ENCODE measurements at regions of chr12 and their contacts with region 1.

Region 1: GRCh38 chr12:52278541-52279421 is 4.3 kb downstream of the KRT86 start:
- DNase-seq: peak; percentile 44 to 60 (median 55)
- H3K4me3 ChIP-seq: no peak overlapping the region
- H3K4me3 Mint-ChIP-seq: peak overlapping the region in 5 of 8 donors; percentile 6 to 55 (median 44)
- H3K27ac ChIP-seq: no peak overlapping the region
- H3K27ac Mint-ChIP-seq: no peak overlapping the region
- H3K4me1 ChIP-seq: no peaks in the 10 kb centered on the region
- H3K4me1 Mint-ChIP-seq: peaks cover 3 to 5% (median 3%) of the 10 kb centered on the region in 4 donors
- H3K27me3 ChIP-seq: no peaks in the 10 kb centered on the region
- H3K27me3 Mint-ChIP-seq: peaks cover 8 to 13% of the 10 kb centered on the region in 2 donors

Region 2: DNA sequence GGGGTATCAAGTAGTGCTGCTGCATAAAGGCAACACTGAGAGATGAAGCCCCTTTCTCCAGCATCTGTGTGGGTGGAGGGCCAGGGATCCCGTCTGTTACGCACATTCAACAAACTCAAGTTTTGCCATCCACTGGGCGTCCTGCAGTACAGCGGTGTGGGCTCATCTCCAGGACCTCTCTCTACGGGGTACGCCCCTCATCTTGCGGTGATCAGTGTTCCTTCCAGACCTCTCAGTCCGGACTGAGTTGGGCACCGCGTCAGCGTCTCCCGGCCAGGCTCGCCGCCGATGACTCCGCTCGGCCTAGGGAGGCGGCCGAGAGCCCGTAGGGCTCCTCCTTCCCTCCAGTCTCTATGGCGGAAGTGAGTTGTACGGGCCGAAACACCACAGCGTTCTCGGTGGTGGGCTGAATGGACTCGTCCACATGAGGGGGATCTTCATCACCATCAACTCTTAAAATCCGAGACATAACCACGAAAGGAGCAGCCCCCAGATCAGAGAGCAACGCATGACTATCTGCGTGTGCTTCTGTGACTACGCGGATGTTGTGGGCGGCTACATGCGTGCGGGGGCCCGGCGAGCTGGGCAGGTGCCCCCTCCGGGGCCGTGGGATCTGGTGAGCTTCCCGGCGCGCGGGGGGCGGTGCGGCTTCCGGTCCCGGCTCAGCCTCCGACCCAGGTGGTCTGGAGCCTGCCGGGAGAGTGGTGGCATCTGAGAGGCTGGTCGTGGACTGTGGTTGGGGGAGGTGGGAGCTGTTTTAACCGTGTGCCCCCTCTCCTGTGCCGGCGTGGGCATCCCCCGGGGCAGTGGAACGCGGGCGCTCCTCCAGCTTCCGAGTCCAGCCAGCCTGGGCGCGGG is 209.2 kb before region 1 on chr12 and contains the start of gene ATG101:
- CTCF ChIA-PET with region 1: no interaction called
- POLR2A ChIA-PET with region 1: no interaction called
- intact Hi-C with region 1: no loop called
- DNase-seq: peak; percentile 90 to 92 (median 91)
- H3K4me3 ChIP-seq: peak within 1 kb of the TSS; percentile 92 to 96
- H3K4me3 Mint-ChIP-seq: peak within 1 kb of the TSS; percentile 94 to 100 (median 98)
- H3K27ac ChIP-seq: peak within 1 kb of the TSS; percentile 87
- H3K27ac Mint-ChIP-seq: peak within 1 kb of the TSS; percentile 94 to 100 (median 100)
- H3K4me1 ChIP-seq: peaks cover 42% of the 10 kb centered on the region
- H3K4me1 Mint-ChIP-seq: peaks cover 36 to 48% (median 41%) of the 10 kb centered on the region in 4 donors
- H3K27me3 ChIP-seq: no peaks in the 10 kb centered on the region
- H3K27me3 Mint-ChIP-seq: peaks cover 0 to 2% of the 10 kb centered on the region in 2 donors
- total RNA-seq, gene ATG101: 24.4 to 27.0 TPM

Region 3: DNA sequence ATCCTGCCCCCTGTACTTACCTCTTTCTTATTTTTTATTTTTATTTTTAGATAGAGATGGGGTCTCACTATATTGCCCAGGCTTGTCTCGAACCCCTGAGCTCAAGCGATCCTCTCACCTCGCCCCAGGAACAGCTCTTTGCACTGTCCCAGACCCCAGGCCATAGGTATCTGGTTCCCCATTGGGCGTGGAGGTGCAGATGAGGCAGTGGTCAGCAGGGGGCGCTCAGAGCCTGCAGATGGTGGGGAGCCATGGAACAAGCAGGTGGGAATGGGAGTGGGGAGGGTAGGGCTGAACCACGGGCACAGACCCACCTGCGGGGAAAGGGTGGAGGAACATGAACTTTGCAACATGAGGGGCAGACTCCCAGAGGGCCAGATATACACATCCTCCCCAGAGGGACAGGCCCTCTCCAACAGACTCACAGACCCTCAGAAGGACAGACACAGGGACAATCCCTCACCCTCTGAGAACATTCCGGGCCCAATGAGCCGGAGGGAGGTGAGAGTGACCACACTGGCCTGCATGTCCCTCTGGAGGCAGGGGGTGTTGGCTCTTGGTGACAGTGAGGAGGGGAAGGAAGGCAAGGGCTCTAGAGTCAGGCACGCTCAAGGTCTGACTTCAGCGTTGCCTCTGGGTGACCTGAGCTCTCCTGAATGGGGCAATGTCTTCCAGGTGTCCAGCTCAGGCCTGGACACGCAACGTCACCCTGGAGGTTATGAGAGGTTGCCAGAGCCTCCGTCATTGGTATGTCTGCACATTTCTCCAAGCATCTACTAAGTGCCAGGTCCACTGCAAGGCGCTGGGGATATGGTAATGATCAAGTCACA is 121.8 kb before region 1 on chr12:
- CTCF ChIA-PET with region 1: interaction called, 21 read pairs
- POLR2A ChIA-PET with region 1: no interaction called
- intact Hi-C with region 1: loop called (anchors 2 kb)
- DNase-seq: peak; percentile 67 to 73 (median 68)
- H3K4me3 ChIP-seq: no peak overlapping the region
- H3K4me3 Mint-ChIP-seq: peak overlapping the region in 1 of 8 donors; percentile 21
- H3K27ac ChIP-seq: no peak overlapping the region
- H3K27ac Mint-ChIP-seq: peak overlapping the region in 6 of 7 donors; percentile 48 to 98 (median 97)
- H3K4me1 ChIP-seq: peaks cover 60% of the 10 kb centered on the region
- H3K4me1 Mint-ChIP-seq: peaks cover 30 to 70% (median 41%) of the 10 kb centered on the region in 4 donors
- H3K27me3 ChIP-seq: no peaks in the 10 kb centered on the region
- H3K27me3 Mint-ChIP-seq: no peaks in the 10 kb centered on the region

Region 4: GRCh38 chr12:52243856-52244614 is 34.7 kb before region 1 on chr12:
- CTCF ChIA-PET with region 1: interaction called, 12 read pairs
- POLR2A ChIA-PET with region 1: no interaction called
- intact Hi-C with region 1: no loop called
- DNase-seq: peak; percentile 22 to 86 (median 52)
- H3K4me3 ChIP-seq: no peak overlapping the region
- H3K4me3 Mint-ChIP-seq: peak overlapping the region in 6 of 8 donors; percentile 6 to 79 (median 34)
- H3K27ac ChIP-seq: peak overlapping the region; percentile 43
- H3K27ac Mint-ChIP-seq: peak overlapping the region; percentile 80 to 93 (median 88)
- H3K4me1 ChIP-seq: peaks cover 19% of the 10 kb centered on the region
- H3K4me1 Mint-ChIP-seq: peaks cover 9 to 41% (median 13%) of the 10 kb centered on the region in 4 donors
- H3K27me3 ChIP-seq: no peaks in the 10 kb centered on the region
- H3K27me3 Mint-ChIP-seq: peaks cover 0 to 7% of the 10 kb centered on the region in 2 donors

Region 5: GRCh38 chr12:52268212-52268611 is 10.6 kb before region 1 on chr12:
- CTCF ChIA-PET with region 1: interaction called, 77 read pairs
- POLR2A ChIA-PET with region 1: no interaction called
- intact Hi-C with region 1: no loop called
- DNase-seq: no peak
- H3K4me3 ChIP-seq: no peak overlapping the region
- H3K4me3 Mint-ChIP-seq: no peak overlapping the region
- H3K27ac ChIP-seq: no peak overlapping the region
- H3K27ac Mint-ChIP-seq: no peak overlapping the region
- H3K4me1 ChIP-seq: no peaks in the 10 kb centered on the region
- H3K4me1 Mint-ChIP-seq: no peaks in the 10 kb centered on the region
- H3K27me3 ChIP-seq: peaks cover 4% of the 10 kb centered on the region
- H3K27me3 Mint-ChIP-seq: peaks cover 13% of the 10 kb centered on the region in 2 donors

Region 6: GRCh38 chr12:52310622-52311284 is 32.0 kb after region 1 on chr12:
- CTCF ChIA-PET with region 1: interaction called, 15 read pairs
- POLR2A ChIA-PET with region 1: no interaction called
- intact Hi-C with region 1: no loop called
- DNase-seq: no peak
- H3K4me3 ChIP-seq: no peak overlapping the region
- H3K4me3 Mint-ChIP-seq: peak overlapping the region in 1 of 8 donors; percentile 24
- H3K27ac ChIP-seq: no peak overlapping the region
- H3K27ac Mint-ChIP-seq: no peak overlapping the region
- H3K4me1 ChIP-seq: no peaks in the 10 kb centered on the region
- H3K4me1 Mint-ChIP-seq: peaks cover 4 to 11% (median 4%) of the 10 kb centered on the region in 4 donors
- H3K27me3 ChIP-seq: peaks cover 8% of the 10 kb centered on the region
- H3K27me3 Mint-ChIP-seq: peaks cover 32 to 57% of the 10 kb centered on the region in 2 donors